Caco-2 (cell line): ENCODE measurements at regions of chr3 and their contacts with region 1.

Region 1: GRCh38 chr3:190384241-190384863 is 3.6 kb upstream of the CLDN16 start:
- DNase-seq: peak; percentile 75 to 83
- H3K4me3 ChIP-seq: no peak overlapping the region
- H3K4me3 Mint-ChIP-seq: no peak overlapping the region
- H3K27ac Mint-ChIP-seq: no peak overlapping the region
- H3K4me1 ChIP-seq: no peaks in the 10 kb centered on the region
- H3K4me1 Mint-ChIP-seq: peaks cover 10% of the 10 kb centered on the region
- H3K27me3 ChIP-seq: no peaks in the 10 kb centered on the region
- H3K27me3 Mint-ChIP-seq: no peaks in the 10 kb centered on the region
- CTCF ChIP-seq: peak; percentile 65 to 73

Region 2: DNA sequence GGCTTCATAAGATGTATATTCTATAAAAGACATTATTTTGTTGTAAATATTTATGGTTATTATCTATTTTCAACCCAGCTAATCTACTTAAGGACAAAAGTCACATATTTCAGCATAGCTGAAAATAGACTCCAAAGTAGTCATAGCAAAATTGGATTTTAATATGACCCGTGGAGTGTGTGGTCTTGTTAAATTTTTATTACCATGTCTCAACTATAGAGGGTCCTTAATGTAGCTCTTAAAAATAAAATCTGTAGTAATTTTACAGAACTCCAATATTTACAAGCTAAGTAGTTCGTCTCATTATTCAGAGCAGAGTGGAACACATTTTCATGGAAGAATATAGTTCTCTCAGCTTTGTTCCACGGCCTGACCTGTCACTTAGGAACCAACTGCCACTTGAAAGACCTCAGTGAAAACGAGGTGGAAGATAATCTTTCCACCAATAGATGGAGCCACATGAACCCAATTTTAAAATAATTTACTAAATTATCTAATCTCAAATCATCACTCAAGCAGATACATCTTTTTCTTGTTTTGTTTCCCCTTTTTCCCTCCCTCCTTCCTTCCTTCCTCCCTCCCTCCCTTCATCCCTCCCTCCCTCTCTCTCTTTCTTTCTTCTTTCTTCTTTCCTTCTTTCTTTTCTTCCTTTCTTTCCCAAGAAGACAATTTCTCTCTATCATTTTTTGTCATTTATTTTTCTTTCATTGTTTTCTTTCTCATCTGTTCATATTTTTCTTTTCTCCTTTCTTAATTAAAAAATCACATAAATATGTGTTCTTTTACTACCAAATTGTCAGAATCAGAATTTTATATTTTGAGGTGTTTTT is 159.3 kb before region 1 on chr3:
- CTCF ChIA-PET with region 1: interaction called, 6 read pairs
- POLR2A ChIA-PET with region 1: no interaction called
- intact Hi-C with region 1: loop called (anchors 1 kb)
- DNase-seq: peak in 1 of 2 experiments; percentile 41
- H3K4me3 ChIP-seq: no peak overlapping the region
- H3K4me3 Mint-ChIP-seq: no peak overlapping the region
- H3K27ac Mint-ChIP-seq: no peak overlapping the region
- H3K4me1 ChIP-seq: no peaks in the 10 kb centered on the region
- H3K4me1 Mint-ChIP-seq: peaks cover 7% of the 10 kb centered on the region
- H3K27me3 ChIP-seq: no peaks in the 10 kb centered on the region
- H3K27me3 Mint-ChIP-seq: no peaks in the 10 kb centered on the region
- CTCF ChIP-seq: peak in 1 of 2 experiments; percentile 53

Region 3: GRCh38 chr3:190321789-190322603 is 62.4 kb before region 1 on chr3 and contains the start of gene CLDN1:
- CTCF ChIA-PET with region 1: interaction called, 24 read pairs
- POLR2A ChIA-PET with region 1: interaction called, 4 read pairs
- intact Hi-C with region 1: loop called (anchors 1 kb)
- DNase-seq: peak; percentile 83 to 92
- H3K4me3 ChIP-seq: peak within 1 kb of the TSS; percentile 66
- H3K4me3 Mint-ChIP-seq: peak within 1 kb of the TSS; percentile 81
- H3K27ac Mint-ChIP-seq: peak within 1 kb of the TSS; percentile 56
- H3K4me1 ChIP-seq: peaks cover 9% of the 10 kb centered on the region
- H3K4me1 Mint-ChIP-seq: peaks cover 29% of the 10 kb centered on the region
- H3K27me3 ChIP-seq: no peaks in the 10 kb centered on the region
- H3K27me3 Mint-ChIP-seq: no peaks in the 10 kb centered on the region
- CTCF ChIP-seq: peak; percentile 92 to 96
- total RNA-seq, gene CLDN1: 38.9 and 39.3 TPM in 2 replicates

Region 4: GRCh38 chr3:190443257-190443656 is 58.9 kb after region 1 on chr3:
- CTCF ChIA-PET with region 1: interaction called, 3 read pairs
- POLR2A ChIA-PET with region 1: no interaction called
- intact Hi-C with region 1: loop called (anchors 1 kb)
- DNase-seq: peak in 1 of 2 experiments; percentile 9
- H3K4me3 ChIP-seq: no peak overlapping the region
- H3K4me3 Mint-ChIP-seq: no peak overlapping the region
- H3K27ac Mint-ChIP-seq: no peak overlapping the region
- H3K4me1 ChIP-seq: peaks cover 20% of the 10 kb centered on the region; the same call in 1 of the 2 replicates
- H3K4me1 Mint-ChIP-seq: peaks cover 15% of the 10 kb centered on the region
- H3K27me3 ChIP-seq: no peaks in the 10 kb centered on the region
- H3K27me3 Mint-ChIP-seq: no peaks in the 10 kb centered on the region
- CTCF ChIP-seq: peak in 1 of 2 experiments; percentile 36